GM10248 (cell line): ENCODE measurements at regions of chr10 and their contacts with region 1.

Region 1: DNA sequence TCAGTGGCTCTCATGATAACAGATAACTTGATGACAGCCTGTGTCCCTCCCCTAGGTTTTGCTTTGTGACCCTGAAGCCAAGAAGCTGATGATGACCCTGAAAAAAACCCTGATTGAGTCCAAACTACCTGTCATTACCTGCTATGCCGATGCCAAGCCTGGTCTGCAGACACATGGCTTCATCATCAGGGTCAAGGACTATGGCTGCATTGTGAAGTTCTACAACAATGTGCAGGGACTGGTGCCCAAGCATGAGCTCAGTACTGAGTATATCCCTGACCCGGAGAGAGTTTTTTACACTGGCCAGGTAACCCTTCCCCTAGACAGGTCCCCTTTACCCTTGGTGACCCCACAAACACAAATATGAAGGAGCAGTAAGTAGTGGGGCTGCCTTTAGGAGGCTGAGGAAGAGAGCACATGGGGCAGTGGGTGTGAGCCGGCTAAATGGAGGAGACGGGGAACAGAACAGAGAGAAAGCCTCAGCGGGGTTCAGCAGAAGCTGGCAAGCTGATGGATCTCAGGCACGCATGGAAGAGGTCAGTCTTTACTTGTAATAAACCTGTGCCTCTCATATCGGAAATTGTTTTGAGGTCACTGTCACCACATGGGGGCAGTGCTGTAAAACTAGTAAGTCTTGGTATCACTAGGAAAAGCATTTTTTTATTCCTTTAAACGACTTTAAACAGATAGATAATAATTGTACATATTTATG is 20.2 kb downstream of the PDCD11 start:
- DNase-seq: peak; percentile 61
- CTCF ChIP-seq: peak; percentile 63

Region 2: DNA sequence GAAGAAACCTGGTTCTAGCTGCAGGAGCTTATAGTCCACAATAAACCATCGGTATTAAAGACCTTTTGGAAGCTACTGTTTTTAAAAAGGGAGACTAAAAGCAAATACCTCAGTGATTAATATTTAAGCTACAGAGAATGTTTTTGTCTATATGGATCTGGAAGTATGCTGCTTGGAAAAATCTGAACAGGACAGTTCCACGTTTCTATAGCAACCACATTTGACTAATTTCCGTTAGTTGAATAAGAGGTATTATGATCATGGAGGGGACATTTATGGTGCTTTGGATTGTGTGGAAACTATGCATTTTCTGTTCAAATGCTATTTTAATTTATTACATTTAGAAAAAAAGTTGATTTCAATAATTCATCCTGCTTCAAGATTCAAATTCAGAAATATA is 28.4 kb before region 1 on chr10:
- CTCF ChIA-PET with region 1: interaction called, 10 read pairs
- POLR2A ChIA-PET with region 1: no interaction called
- DNase-seq: no peak
- CTCF ChIP-seq: no peak

Region 3: GRCh38 chr10:103427866-103428265 is 11.3 kb after region 1 on chr10:
- CTCF ChIA-PET with region 1: interaction called, 32 read pairs
- POLR2A ChIA-PET with region 1: no interaction called
- DNase-seq: no peak
- CTCF ChIP-seq: no peak

Region 4: DNA sequence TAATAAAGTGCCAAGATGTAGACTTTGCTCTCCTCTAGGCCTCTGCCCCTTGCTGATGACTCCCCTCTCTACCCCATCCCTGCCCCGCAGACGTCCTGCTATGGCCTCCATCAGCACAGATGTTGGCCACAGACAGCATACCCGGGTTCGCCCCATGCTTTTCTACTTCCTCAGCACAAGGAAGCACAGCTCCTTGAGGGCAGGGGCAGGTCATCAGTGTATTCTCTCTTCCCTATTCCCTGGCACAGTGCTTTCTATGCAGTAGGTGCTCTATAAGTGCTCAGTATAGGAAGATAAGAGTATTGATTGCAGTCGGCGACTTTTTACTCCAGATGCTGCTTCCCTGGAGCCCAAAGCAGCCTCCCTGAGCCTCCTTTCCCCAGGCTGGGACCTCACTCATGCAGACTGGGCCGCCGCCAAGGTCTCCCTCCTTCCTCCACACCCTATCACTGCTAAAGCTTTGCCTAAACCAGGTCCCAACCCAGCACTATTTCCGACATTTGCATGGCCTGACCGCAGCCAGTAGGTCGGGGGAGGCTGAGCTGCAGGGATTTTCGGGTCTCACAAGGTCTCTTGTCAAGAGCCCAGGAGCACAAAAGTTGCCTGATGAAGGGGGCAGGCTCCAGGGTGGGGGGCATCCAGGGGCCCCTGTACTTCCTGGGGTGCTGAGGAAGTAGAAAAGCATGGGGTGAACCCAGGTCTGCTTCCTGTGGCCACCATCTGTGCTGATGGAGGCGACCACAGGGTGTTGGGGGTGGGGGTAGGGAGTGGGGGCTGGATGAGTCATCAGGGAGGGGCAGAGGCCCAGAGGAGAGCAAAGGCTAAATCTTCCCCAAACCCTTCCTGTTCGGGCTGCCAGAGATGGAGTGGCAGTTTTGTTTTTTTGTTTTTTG is 54.4 kb after region 1 on chr10:
- CTCF ChIA-PET with region 1: interaction called, 95 read pairs
- POLR2A ChIA-PET with region 1: interaction called, 3 read pairs
- DNase-seq: peak; percentile 88
- CTCF ChIP-seq: no peak

Region 5: DNA sequence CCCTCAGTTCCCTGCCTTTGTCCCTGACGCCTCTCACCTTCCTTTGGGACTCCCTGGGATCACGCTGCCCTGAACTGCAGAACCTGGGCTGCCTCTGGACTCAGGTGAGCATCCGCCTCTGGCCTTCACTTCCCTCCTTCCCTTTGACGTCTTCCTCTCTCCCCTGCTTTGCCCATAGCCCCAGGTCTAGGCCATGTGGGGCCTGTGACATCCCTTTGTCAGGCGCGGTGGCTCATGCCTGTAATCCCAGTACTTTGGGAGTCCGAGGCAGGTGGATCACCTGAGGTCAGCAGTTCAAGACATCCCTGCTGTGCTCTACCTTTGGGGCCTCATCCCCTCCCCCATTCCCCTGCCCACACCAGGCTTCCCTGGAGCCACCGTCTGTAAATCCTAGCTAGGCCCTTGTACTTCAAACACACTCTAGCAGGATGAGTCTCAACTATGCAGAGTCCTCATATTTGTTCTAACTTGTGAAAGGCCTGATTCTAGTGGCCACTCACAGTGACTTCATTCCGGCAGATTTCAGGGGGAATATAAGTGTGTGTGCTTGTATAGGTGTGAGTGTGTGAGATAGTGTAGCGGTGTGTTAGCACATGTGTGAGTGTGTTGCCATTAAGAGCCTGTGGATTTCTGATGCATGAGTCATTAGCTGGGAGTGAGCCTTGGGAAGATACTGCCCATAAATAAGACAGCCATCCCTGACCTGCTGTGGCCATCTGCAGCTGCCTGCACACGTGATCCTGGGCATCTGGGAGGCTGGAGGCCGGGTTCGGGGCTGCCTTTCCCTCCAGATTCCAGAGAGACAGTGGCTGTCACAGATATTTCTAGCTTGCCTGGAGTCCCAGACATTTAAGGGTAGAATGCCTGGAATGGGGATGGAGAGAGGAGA is 75.1 kb after region 1 on chr10:
- CTCF ChIA-PET with region 1: interaction called, 135 read pairs
- POLR2A ChIA-PET with region 1: no interaction called
- DNase-seq: no peak
- CTCF ChIP-seq: no peak